ENCODE measurements at regions of chr5 and their contacts with region 1.

Region 1: DNA sequence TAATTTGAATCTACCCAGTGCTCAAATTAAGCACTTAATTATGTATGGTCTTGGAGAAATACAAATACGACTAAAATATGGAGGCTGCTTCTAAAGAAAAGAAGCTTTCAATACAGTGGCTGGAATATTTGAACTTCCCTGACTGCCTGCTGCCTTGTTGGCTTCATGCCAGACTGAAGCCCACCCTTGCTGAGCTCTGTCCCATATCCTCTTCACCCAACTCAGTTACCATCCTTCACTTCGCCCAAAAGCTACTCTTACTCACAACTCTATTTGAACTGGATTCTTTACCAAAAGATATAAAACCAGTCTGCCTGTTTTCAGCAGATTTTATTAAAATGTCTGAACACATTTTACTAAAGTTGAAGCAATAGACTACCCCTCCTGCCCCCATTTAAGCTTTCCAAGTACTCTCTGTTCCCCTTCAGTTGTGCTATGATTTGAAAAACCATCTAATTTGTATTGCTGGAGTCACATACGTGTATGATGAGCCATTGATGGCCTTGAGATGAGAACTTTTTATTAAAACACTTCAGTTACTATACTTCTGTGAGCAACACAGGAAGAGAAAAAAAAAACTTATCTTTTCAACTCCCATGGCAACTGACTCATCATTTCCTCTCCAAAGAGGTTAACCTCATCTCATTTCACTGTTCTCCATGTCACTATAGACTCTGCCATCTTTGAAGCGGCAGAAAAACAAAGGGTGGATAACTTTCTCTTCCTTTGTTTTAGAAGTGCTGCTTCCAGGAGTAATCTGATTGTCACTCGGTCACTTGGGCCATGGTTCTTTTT is 104.1 kb upstream of the PCSK1 start:
- DNase-seq: no peak
- H3K4me3 Mint-ChIP-seq: peak overlapping the region; percentile 2
- H3K27ac Mint-ChIP-seq: peak overlapping the region; percentile 68
- H3K4me1 Mint-ChIP-seq: peaks cover 33% of the 10 kb centered on the region
- H3K27me3 Mint-ChIP-seq: no peaks in the 10 kb centered on the region

Region 2: GRCh38 chr5:95870105-95870672 is 667.0 kb before region 1 on chr5:
- CTCF ChIA-PET with region 1: no interaction called
- POLR2A ChIA-PET with region 1: no interaction called
- intact Hi-C with region 1: loop called (anchors 1 kb)
- DNase-seq: peak; percentile 71
- H3K4me3 Mint-ChIP-seq: peak overlapping the region; percentile 54
- H3K27ac Mint-ChIP-seq: peak overlapping the region; percentile 98
- H3K4me1 Mint-ChIP-seq: peaks cover 58% of the 10 kb centered on the region
- H3K27me3 Mint-ChIP-seq: no peaks in the 10 kb centered on the region

Region 3: GRCh38 chr5:96220610-96221390 is 316.4 kb before region 1 on chr5:
- CTCF ChIA-PET with region 1: no interaction called
- POLR2A ChIA-PET with region 1: no interaction called
- intact Hi-C with region 1: loop called (anchors 1 kb)
- DNase-seq: peak; percentile 37
- H3K4me3 Mint-ChIP-seq: no peak overlapping the region
- H3K27ac Mint-ChIP-seq: peak overlapping the region; percentile 78
- H3K4me1 Mint-ChIP-seq: peaks cover 22% of the 10 kb centered on the region
- H3K27me3 Mint-ChIP-seq: peaks cover 3% of the 10 kb centered on the region

Region 4: DNA sequence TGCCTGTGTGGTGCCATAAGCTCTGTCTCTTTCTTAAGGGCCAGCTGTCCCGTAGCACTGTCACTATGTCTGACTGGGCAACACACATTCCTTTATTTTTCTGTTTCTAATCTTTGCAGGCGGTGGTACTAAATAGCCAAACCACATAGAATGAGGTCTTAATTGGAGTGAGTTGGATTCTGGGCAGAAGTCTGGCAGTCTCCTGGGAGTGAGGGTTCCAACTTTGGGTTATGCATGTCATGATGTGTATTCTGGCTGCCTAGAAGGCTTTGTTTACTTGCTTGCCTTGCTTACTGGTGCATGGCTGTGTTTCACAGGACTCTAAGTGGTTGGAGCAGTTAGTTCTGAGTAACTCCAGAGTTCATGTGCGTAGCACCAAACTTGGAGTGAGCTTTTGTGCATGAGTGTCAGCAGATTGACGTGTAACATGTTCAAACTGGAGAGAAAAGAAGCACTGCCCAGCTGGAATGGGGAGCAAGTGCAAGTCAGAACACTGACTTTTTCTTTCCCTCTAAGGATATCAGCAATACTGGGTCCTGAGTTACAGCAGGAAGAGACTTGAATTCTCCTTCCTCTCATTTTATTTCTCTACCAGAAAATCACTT is 290.0 kb before region 1 on chr5:
- CTCF ChIA-PET with region 1: no interaction called
- POLR2A ChIA-PET with region 1: no interaction called
- intact Hi-C with region 1: no loop called
- DNase-seq: no peak
- H3K4me3 Mint-ChIP-seq: no peak overlapping the region
- H3K27ac Mint-ChIP-seq: no peak overlapping the region
- H3K4me1 Mint-ChIP-seq: no peaks in the 10 kb centered on the region
- H3K27me3 Mint-ChIP-seq: peaks cover 22% of the 10 kb centered on the region

Region 5: DNA sequence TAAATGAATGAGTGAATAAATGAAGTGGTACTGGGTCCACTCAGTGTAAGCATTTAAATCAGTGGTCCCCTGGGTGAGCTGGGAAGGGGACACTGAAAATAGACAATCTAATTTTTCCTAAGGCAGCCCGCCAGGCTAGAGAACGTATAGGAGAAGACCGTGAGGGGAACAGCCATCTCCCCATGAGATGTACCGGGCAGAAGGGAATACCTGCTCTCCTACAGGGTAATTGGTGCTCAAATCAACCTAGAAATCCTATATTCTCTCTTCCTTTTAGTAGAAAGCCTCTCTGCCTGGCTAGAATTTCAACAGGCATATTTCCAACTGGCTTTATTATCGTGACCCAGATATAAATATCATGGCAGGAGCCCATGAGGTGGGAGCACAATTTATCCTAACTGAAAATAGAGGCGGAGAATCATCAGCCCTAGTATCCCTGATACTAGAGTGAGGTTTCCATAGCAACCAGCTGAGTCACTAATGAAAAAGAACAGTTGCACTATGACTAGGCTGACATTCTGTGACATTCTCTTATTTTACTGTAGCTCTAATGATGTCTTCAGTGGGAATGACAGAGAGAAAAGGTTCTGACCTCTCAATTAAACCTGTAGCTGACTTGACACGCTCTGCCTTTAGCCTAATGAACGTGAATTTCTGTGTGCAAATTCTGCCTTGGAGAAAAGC is 28.5 kb after region 1 on chr5:
- CTCF ChIA-PET with region 1: no interaction called
- POLR2A ChIA-PET with region 1: no interaction called
- intact Hi-C with region 1: loop called (anchors 2 kb)
- DNase-seq: no peak
- H3K4me3 Mint-ChIP-seq: no peak overlapping the region
- H3K27ac Mint-ChIP-seq: no peak overlapping the region
- H3K4me1 Mint-ChIP-seq: peaks cover 17% of the 10 kb centered on the region
- H3K27me3 Mint-ChIP-seq: no peaks in the 10 kb centered on the region

Region 6: DNA sequence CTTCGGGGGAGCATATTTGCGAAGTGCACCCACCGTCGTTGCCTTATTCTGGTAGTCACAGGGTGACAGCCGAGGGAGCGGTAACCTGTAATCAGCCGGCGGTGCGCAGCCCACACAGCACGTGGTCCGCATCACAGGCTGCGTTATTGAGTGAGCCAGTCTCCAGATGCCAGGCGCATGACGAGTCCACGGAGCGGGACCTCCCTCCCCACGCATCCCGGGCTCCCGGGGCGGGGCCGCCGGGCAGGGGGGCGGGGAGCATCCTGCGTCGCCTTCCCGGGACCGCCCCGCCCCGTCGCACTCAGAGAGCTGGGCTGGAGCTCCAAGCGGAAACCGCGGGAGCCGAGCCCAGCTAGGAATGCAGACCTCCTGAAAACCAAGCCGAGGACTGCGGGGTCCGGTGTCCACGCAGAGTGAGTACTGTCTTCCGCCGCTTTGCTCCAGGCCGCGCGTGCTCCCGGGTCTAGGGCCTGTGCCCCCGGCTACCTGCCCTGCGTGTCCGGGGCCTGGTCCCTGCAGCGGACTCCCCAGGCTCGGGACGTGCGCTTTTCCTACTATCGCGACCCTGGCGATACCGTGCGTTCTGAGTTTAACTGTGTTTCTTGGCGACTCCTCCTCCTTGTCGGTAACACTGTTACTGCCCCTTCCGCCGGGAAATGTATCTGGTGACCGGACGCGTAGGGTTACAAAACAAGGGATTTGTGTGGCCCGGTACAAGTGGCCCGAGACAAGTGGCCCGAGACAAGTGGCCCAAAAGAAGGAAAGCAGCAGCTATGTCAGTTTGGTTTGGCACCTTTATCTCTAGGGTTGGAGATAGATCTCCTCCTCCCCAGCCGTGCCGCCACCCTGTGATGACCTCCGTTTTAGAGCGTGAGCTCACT is 165.6 kb after region 1 on chr5:
- CTCF ChIA-PET with region 1: no interaction called
- POLR2A ChIA-PET with region 1: no interaction called
- intact Hi-C with region 1: loop called (anchors 1 kb)
- DNase-seq: peak; percentile 92
- H3K4me3 Mint-ChIP-seq: peak overlapping the region; percentile 84
- H3K27ac Mint-ChIP-seq: peak overlapping the region; percentile 85
- H3K4me1 Mint-ChIP-seq: peaks cover 52% of the 10 kb centered on the region
- H3K27me3 Mint-ChIP-seq: no peaks in the 10 kb centered on the region

Region 7: GRCh38 chr5:97183100-97183929 is 646.1 kb after region 1 on chr5 and contains the start of gene RIOK2:
- CTCF ChIA-PET with region 1: no interaction called
- POLR2A ChIA-PET with region 1: no interaction called
- intact Hi-C with region 1: loop called (anchors 5 kb)
- DNase-seq: peak; percentile 96
- H3K4me3 Mint-ChIP-seq: peak within 1 kb of the TSS; percentile 87
- H3K27ac Mint-ChIP-seq: peak within 1 kb of the TSS; percentile 98
- H3K4me1 Mint-ChIP-seq: peaks cover 34% of the 10 kb centered on the region
- H3K27me3 Mint-ChIP-seq: no peaks in the 10 kb centered on the region
- total RNA-seq, gene RIOK2: 31.8 to 41.5 TPM